K562 (cell line): ENCODE measurements at regions of chr10 and their contacts with region 1.

Region 1: DNA sequence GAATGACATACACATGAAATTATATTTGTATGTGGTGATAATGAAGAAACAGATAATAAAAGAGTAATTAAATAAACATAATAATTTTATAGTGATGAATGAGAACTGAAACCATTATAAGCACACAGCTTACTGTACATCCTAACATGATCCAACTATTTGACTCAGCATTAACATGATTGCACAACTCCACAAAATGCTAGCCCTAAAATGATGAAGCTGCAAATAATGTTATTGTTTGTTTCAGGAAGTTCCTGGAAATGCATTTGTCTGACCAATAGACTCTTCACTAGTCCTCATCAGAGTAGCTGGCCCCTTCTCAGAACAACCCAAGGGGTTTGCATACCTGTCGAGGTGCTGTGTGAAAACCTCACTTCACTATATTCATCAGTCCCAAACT is 115.5 kb downstream of the RTKN2 start:
- DNase-seq: no peak
- ATAC-seq: no peak
- H3K4me3 ChIP-seq: no peak overlapping the region
- H3K27ac ChIP-seq: no peak overlapping the region
- H3K4me1 ChIP-seq: no peaks in the 10 kb centered on the region
- H3K27me3 ChIP-seq: peaks cover 0 to 10% of the 10 kb centered on the region in 2 experiments; a peak in 1 of 5 replicates
- CTCF ChIP-seq: no peak
- EP300 ChIP-seq: no peak
- POLR2A ChIP-seq: no peak
- RAD21 ChIP-seq: no peak

Region 2: DNA sequence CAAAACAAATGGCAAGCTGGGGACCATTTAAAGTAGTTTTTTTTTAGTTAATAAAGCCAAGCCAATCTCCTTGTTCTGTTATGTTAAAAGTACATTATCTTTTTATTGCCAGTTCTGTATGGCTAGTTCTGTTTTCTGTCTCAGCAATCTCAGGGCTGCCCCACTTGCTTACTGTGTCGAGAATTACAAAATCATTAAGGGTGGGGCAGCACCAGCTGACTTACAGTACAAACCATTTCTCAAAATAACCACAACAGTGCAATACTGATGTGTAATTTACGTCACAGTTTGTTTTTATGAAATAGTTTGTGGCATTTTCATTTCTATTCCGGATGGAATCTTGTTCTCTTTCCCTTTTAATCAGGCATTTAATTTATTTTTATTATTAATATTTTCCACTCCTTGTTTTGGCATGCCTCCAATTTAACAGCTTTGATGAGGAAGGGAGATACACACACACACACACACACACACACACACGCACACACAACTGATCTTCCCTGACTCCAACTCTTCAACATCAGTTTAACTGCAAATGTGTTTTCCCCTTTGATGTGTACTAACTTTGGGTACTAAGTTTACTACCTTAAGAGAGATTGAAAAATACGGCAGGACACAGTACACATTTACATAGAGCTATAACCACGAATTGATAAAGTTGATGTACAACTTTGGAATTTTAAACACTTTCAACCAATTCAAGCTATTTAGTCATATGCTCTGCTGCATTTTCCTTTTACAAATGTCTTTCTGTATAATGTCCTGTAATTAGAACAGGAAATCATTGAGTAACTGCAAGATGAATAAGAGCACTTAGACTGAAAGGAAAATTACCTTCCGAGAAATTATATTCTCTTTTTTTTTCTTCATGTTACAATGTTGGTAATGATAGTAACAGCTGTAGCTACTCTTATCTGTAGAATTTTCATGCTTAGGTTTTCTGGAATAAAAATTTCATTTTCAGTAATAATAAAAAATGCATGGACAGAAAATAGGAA is 160.2 kb before region 1 on chr10:
- CTCF ChIA-PET with region 1: no interaction called
- POLR2A ChIA-PET with region 1: no interaction called
- in situ Hi-C with region 1: no loop called
- intact Hi-C with region 1: no loop called
- DNase-seq: no peak
- ATAC-seq: no peak
- H3K4me3 ChIP-seq: no peak overlapping the region
- H3K27ac ChIP-seq: no peak overlapping the region
- H3K4me1 ChIP-seq: no peaks in the 10 kb centered on the region
- H3K27me3 ChIP-seq: no peaks in the 10 kb centered on the region; a peak in 1 of 5 replicates
- CTCF ChIP-seq: no peak
- EP300 ChIP-seq: no peak
- POLR2A ChIP-seq: no peak
- RAD21 ChIP-seq: no peak

Region 3: GRCh38 chr10:62214364-62214874 is 61.2 kb after region 1 on chr10:
- CTCF ChIA-PET with region 1: no interaction called
- POLR2A ChIA-PET with region 1: no interaction called
- in situ Hi-C with region 1: no loop called
- intact Hi-C with region 1: loop called (anchors 5 kb)
- DNase-seq: no peak
- ATAC-seq: no peak
- H3K4me3 ChIP-seq: no peak overlapping the region
- H3K27ac ChIP-seq: no peak overlapping the region
- H3K4me1 ChIP-seq: no peaks in the 10 kb centered on the region
- H3K27me3 ChIP-seq: no peaks in the 10 kb centered on the region
- CTCF ChIP-seq: no peak
- EP300 ChIP-seq: no peak
- POLR2A ChIP-seq: no peak
- RAD21 ChIP-seq: no peak